ENCODE measurements at regions of chr2 and their contacts with region 1.

Region 1: DNA sequence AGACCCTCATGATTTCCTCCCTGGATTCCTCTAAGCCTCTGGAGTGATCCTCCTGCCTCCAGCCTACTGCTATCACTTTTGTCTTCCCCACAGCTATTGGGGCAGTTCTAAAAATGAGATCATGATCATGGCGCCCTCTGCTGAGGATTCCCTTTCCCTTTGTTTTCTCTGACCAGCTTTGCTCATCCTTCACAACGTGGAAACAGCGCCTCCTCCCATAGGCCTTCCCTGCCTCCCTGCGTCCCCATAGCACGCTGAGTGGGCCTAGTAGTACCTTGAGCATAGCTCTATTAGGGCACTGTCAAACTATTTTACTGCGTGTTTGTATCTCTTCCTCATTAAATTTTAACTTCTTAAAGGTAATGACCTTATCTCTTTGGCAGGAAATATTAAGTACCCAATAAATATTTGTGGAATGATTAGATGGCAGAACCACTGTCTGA is 207.0 kb upstream of the FANCL start:
- DNase-seq: no peak
- H3K4me3 Mint-ChIP-seq: no peak overlapping the region
- H3K27ac Mint-ChIP-seq: no peak overlapping the region
- H3K4me1 Mint-ChIP-seq: no peaks in the 10 kb centered on the region
- H3K27me3 Mint-ChIP-seq: peaks cover 5% of the 10 kb centered on the region

Region 2: GRCh38 chr2:57906152-57906732 is 541.8 kb before region 1 on chr2:
- intact Hi-C with region 1: loop called (anchors 1 kb)
- DNase-seq: no peak
- H3K4me3 Mint-ChIP-seq: no peak overlapping the region
- H3K27ac Mint-ChIP-seq: no peak overlapping the region
- H3K4me1 Mint-ChIP-seq: peaks cover 6% of the 10 kb centered on the region
- H3K27me3 Mint-ChIP-seq: no peaks in the 10 kb centered on the region